ENCODE measurements at regions of chr20 and their contacts with region 1.

Region 1: DNA sequence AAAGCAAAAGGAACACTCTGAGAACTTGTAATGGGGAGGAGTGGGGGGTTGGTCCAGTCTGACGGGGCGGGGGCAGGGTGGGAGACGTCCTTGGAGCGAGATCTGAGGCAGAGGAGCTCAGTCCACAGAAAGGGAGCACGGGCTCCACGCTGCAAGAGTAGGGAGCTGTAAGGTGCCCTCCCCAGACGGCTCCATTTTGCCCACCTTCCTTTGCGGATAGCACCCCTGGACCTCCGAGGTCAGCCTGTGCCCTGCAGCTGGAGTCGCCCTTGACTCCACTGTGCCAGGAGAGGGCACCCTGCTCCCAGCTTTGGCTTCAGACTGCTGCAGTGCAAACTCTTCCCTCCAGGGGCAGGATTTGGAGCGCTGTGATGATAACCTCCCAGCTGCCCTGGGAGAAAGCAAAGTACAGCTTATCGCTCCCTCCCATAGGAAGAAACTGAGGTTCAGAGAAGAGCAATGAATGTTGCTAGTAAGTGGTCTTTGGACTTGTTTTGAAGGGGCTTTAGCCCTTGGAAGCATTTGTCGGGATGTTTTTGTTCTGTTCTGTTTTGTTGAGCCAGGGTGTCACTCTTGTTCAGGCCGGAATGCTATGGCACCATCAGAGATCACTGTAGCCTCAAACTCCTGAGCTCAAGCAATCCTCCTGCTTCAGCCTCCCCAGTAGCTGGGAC is 9.5 kb upstream of the AHCY start:
- DNase-seq: peak; percentile 91
- H3K4me3 Mint-ChIP-seq: peak overlapping the region; percentile 35
- H3K27ac Mint-ChIP-seq: no peak overlapping the region
- H3K4me1 Mint-ChIP-seq: peaks cover 37% of the 10 kb centered on the region
- H3K27me3 Mint-ChIP-seq: no peaks in the 10 kb centered on the region
- CTCF ChIP-seq: peak; percentile 100

Region 2: DNA sequence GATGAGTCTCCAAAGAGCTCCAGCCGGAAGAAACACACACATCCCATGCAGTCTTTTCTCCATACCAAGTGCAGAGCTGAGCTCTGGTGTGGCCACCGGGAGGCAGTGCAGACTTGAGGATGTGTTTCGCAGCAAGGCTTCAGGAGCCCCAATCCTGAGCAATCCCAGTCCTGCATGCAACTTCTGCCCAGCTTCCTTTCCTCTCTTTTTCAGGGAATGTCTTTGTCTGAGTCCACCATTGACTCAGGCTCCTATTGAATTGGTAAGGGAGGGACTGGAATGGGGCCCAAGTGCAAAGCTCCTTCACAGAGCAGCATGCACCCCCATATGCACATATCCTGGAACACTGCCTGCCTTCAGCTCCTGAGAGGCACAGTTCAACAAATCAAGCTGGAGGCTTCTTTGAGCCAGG is 122.0 kb before region 1 on chr20:
- CTCF ChIA-PET with region 1: interaction called, 14 read pairs
- POLR2A ChIA-PET with region 1: no interaction called
- intact Hi-C with region 1: no loop called
- DNase-seq: peak; percentile 79
- H3K4me3 Mint-ChIP-seq: no peak overlapping the region
- H3K27ac Mint-ChIP-seq: no peak overlapping the region
- H3K4me1 Mint-ChIP-seq: no peaks in the 10 kb centered on the region
- H3K27me3 Mint-ChIP-seq: peaks cover 38% of the 10 kb centered on the region
- CTCF ChIP-seq: peak; percentile 85

Region 3: DNA sequence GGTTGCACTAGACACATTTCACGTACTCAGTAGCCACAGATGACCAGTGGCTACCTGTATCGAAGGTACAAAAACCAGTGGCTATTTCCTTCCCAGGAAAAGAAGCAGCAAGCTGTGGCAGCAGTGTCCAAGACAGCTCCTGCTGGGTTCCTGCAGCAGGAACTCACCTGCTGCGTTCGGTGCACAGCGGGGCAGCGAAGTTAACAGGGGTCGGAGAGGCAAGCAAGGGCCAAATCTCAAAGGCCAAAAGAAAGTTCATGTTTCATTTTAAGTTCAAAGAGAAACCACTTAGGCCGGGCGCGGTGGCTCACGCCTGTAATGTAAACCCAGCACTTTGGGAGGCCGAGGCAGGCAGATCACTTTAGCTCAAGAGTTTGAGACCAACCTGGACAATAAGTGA is 44.5 kb before region 1 on chr20:
- CTCF ChIA-PET with region 1: no interaction called
- POLR2A ChIA-PET with region 1: no interaction called
- intact Hi-C with region 1: no loop called
- DNase-seq: no peak
- H3K4me3 Mint-ChIP-seq: no peak overlapping the region
- H3K27ac Mint-ChIP-seq: peak overlapping the region; percentile 25
- H3K4me1 Mint-ChIP-seq: no peaks in the 10 kb centered on the region
- H3K27me3 Mint-ChIP-seq: no peaks in the 10 kb centered on the region
- CTCF ChIP-seq: no peak

Region 4: GRCh38 chr20:34377072-34377847 is 64.6 kb after region 1 on chr20:
- CTCF ChIA-PET with region 1: interaction called, 12 read pairs
- POLR2A ChIA-PET with region 1: interaction called, 8 read pairs
- intact Hi-C with region 1: no loop called
- DNase-seq: no peak
- H3K4me3 Mint-ChIP-seq: no peak overlapping the region
- H3K27ac Mint-ChIP-seq: peak overlapping the region; percentile 25
- H3K4me1 Mint-ChIP-seq: no peaks in the 10 kb centered on the region
- H3K27me3 Mint-ChIP-seq: no peaks in the 10 kb centered on the region
- CTCF ChIP-seq: no peak

Region 5: DNA sequence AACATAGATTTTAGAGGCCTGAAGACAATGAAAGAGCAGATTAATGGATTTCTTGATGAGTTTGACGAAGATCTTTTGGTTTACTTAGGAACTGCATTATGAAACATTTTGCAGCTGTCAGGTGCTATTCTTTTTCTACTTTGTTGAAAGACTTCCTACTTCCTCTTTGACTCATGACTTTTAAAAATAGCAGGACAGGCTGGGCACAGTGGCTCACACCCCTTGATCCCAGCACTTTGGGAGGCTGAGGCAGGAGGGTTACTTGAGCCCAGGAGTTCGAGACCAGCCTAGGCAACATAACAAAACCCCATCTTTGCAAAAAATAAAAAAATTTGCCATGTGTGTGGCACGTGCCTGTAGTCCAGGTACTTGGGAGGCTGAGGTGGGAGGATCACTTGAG is 102.4 kb after region 1 on chr20:
- CTCF ChIA-PET with region 1: interaction called, 33 read pairs
- POLR2A ChIA-PET with region 1: interaction called, 3 read pairs
- intact Hi-C with region 1: no loop called
- DNase-seq: no peak
- H3K4me3 Mint-ChIP-seq: no peak overlapping the region
- H3K27ac Mint-ChIP-seq: peak overlapping the region; percentile 32
- H3K4me1 Mint-ChIP-seq: no peaks in the 10 kb centered on the region
- H3K27me3 Mint-ChIP-seq: no peaks in the 10 kb centered on the region
- CTCF ChIP-seq: no peak

Region 6: DNA sequence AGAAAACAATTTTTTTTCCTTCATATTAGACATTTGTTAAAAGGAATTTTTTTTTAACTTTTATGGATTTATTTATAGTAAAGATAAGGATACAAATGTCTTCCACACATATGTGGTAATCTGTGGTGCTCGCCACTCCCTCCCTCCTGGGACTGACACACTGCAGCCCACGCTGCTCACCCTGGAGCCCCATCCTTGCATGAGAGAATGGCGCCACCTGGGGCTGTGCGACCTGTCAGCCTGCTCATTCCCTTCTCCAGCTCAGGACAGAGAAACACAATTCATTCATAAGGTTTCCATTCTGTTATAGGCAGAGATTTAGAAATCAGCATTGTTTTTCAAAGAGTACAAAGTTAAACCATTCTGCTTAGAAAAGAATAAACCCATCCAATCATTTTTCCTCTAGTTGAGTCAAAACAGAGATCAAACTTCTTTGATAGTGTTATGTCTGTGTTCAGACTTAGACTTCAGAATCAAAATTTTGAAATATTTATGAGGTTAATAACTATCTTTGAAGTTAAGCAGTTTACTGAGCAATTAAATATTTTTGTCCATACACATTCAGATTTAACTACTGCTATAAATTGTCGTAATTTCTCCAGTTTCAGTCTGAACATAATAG is 160.7 kb after region 1 on chr20:
- CTCF ChIA-PET with region 1: interaction called, 34 read pairs
- POLR2A ChIA-PET with region 1: interaction called, 6 read pairs
- intact Hi-C with region 1: loop called (anchors 1 kb)
- DNase-seq: peak; percentile 59
- H3K4me3 Mint-ChIP-seq: no peak overlapping the region
- H3K27ac Mint-ChIP-seq: no peak overlapping the region
- H3K4me1 Mint-ChIP-seq: peaks cover 9% of the 10 kb centered on the region
- H3K27me3 Mint-ChIP-seq: no peaks in the 10 kb centered on the region
- CTCF ChIP-seq: peak; percentile 36

Region 7: DNA sequence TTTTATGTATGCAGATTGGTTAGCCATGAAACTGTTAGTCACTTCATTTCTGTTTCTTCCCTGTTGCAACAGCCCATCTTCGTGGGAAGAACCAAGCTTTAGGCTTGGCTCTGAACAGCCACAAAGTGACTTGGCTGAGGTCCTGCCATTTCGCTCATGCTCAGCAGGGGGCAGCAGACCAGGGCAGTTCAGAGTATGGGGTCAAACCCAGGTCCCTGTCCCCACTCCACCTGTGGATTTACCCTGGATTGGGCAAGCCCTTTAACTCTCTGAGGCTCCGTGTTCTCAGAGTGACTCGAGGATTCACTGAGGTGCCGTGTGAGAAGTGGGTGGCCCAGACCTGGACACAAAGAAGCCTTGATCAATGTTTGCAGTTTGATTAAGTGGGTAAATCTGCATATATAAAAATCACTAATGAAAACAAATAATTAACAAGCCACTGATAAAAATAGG is 226.0 kb after region 1 on chr20:
- CTCF ChIA-PET with region 1: interaction called, 14 read pairs
- POLR2A ChIA-PET with region 1: no interaction called
- intact Hi-C with region 1: no loop called
- DNase-seq: peak; percentile 62
- H3K4me3 Mint-ChIP-seq: no peak overlapping the region
- H3K27ac Mint-ChIP-seq: no peak overlapping the region
- H3K4me1 Mint-ChIP-seq: no peaks in the 10 kb centered on the region
- H3K27me3 Mint-ChIP-seq: no peaks in the 10 kb centered on the region
- CTCF ChIP-seq: peak; percentile 75

Measured in MCF 10A (cell line).